Astrocyte of the cerebellum (primary cell): ENCODE measurements at regions of chr22 and their contacts with region 1.

Region 1: GRCh38 chr22:47259990-47260389 is 497.5 kb downstream of the TBC1D22A start:
- DNase-seq: no peak
- H3K4me3 ChIP-seq: no peak overlapping the region
- CTCF ChIP-seq: no peak

Region 2: DNA sequence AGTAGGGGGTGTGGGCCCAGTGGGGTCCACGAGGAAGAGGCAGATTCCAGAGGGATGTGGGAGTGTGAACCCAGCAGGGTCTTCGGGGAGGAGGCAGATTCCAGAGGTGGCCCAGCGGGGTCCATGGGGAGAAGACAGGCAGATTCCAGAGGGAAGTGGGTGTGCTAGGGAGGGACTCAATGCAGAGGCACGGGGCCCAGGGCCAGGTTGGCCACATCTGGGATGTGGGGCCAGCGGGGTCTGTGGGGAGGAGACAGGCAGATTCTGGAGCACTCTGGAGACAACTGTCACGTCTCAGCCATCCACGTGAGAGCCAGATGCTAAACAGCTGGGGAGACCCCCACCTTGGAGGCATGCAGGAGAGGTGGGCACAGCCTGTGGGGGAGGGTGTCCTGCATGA is 85.0 kb after region 1 on chr22:
- in situ Hi-C with region 1: no loop called
- DNase-seq: no peak
- H3K4me3 ChIP-seq: no peak overlapping the region
- CTCF ChIP-seq: no peak

Region 3: DNA sequence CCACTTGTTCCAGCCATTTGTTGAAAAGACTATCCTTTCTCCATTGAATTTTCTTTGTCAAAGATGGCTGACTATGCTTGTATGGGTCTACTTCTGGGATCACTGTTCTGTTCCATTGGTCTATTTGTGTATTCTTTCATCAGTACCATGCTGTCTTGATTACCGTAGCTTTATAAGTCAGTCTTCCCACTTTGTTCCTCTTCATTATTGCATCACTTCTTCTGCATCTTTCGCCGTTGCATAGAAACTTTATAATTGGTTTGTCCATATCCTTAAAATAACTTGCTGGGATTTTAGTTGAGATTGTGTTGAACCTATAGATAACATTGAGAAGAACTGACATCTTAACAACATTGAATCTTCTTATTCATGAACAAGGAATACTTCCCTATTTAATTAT is 101.3 kb after region 1 on chr22:
- in situ Hi-C with region 1: loop called (anchors 5 kb)
- DNase-seq: no peak
- H3K4me3 ChIP-seq: no peak overlapping the region
- CTCF ChIP-seq: no peak